ENCODE measurements at regions of chr4 and their contacts with region 1.

Region 1: DNA sequence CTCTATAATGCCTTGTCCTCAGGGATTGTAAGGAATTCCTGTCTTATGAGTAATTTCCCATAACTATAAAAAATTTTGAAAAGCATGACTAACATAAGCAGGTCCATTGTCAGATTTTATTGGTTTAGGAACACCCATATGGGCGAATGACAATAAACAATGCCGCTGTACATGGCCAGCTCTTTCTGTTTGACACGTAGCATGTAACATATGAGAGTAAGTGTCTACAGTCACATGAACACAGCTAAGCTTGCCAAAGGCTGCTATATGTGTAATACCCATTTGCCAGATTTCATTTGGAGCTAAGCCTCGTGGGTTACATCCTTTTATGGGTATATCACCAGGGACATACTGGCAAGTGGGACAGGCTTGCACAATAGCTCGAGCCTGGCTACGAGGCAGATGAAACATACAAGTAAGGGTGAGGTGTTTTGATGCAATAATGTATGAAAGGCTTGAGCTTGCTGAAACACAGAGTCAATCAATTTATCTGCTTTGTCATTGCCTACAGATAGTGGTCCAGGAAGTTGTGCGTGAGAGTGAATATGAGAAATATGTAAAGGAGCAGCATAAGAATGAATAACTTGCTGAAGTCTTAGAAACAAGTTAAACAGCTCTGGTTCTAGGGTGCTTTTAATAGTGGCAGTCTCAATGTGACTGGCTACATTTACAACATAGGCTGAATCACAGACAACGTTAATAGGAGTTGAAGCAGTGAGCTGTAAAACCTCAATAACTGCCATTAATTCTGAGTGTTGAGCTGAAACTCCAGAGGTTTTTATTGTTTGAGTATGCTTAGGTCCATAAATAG is 67.4 kb upstream of the UGT2B10 start:
- DNase-seq: peak; percentile 98
- ATAC-seq: peak; percentile 87
- H3K4me3 ChIP-seq: peak overlapping the region; percentile 44; the same call in 1 of the 2 replicates
- H3K27ac ChIP-seq: peak overlapping the region; percentile 96
- H3K4me1 ChIP-seq: peaks cover 21% of the 10 kb centered on the region
- H3K27me3 ChIP-seq: no peaks in the 10 kb centered on the region
- CTCF ChIP-seq: no peak

Region 2: GRCh38 chr4:67885762-67886161 is 862.6 kb before region 1 on chr4:
- CTCF ChIA-PET with region 1: no interaction called
- POLR2A ChIA-PET with region 1: no interaction called
- intact Hi-C with region 1: no loop called
- DNase-seq: peak; percentile 94
- ATAC-seq: peak; percentile 91
- H3K4me3 ChIP-seq: peak overlapping the region; percentile 45; the same call in 1 of the 2 replicates
- H3K27ac ChIP-seq: peak overlapping the region; percentile 95
- H3K4me1 ChIP-seq: peaks cover 24% of the 10 kb centered on the region
- H3K27me3 ChIP-seq: no peaks in the 10 kb centered on the region
- CTCF ChIP-seq: no peak

Region 3: DNA sequence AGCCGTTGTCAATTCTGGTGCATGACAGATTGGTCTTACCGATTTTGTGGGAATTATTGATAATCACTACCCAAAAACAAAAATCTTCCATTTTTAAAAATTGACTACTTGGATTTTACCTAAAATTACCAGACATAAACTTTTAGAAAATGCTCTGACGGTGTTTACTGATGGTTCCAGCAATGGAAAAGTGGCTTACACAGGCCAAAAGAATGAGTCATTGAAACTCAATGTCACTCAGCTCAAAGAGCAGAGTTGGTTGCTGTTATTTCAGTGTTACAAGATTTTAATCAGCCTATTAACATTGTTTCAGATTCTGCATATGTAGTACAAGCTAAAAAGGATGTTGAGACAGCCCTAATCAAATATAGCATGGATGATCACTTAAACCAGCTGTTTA is 149.2 kb before region 1 on chr4:
- CTCF ChIA-PET with region 1: no interaction called
- POLR2A ChIA-PET with region 1: no interaction called
- intact Hi-C with region 1: loop called (anchors 1 kb)
- DNase-seq: peak; percentile 75
- ATAC-seq: peak; percentile 66
- H3K4me3 ChIP-seq: no peak overlapping the region
- H3K27ac ChIP-seq: peak overlapping the region; percentile 29
- H3K4me1 ChIP-seq: peaks cover 17% of the 10 kb centered on the region
- H3K27me3 ChIP-seq: no peaks in the 10 kb centered on the region
- CTCF ChIP-seq: no peak

Region 4: DNA sequence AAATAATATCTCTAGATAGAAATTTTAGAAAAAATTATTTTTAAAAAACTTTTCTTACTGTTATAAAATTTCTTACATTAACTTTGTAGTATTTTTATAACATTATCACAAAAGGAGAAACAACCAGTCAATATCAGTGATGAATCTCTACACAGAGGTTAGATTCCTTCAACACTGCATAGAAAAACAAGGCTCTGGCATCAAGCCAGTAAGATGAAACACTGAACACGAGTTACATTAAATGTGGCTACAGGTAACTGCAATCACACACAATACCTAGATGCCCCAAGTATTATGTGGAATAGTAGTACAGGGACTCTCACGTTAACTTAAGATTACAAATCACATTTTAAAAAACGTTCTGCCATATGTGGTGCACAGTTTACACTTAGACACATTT is 72.4 kb after region 1 on chr4:
- CTCF ChIA-PET with region 1: no interaction called
- POLR2A ChIA-PET with region 1: no interaction called
- intact Hi-C with region 1: loop called (anchors 1 kb)
- DNase-seq: peak; percentile 43
- ATAC-seq: no peak
- H3K4me3 ChIP-seq: no peak overlapping the region
- H3K27ac ChIP-seq: no peak overlapping the region
- H3K4me1 ChIP-seq: peaks cover 7% of the 10 kb centered on the region; the same call in 1 of the 2 replicates
- H3K27me3 ChIP-seq: no peaks in the 10 kb centered on the region
- CTCF ChIP-seq: no peak

Region 5: DNA sequence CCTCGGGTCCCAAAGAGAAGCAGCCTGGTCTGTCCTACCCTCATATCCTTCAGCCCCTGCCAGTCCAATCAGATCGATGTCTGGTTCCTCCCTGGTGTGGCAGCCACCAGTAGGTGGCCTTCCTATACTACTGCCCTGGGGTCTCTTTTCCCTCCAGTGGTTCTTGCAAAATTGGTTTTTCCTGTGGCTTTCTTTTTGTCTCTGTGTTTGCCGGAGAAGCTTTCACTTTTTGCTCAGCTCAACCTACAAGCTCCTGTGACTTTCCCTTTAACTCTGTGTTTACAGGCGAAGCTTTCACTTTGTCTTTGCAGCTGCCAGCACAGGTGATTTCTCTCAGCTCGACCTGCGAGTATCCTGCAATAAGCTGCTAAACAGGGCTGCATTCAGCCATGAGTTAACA is 156.4 kb after region 1 on chr4:
- CTCF ChIA-PET with region 1: no interaction called
- POLR2A ChIA-PET with region 1: no interaction called
- intact Hi-C with region 1: loop called (anchors 10 kb)
- DNase-seq: peak; percentile 39
- ATAC-seq: peak; percentile 52
- H3K4me3 ChIP-seq: no peak overlapping the region
- H3K27ac ChIP-seq: no peak overlapping the region
- H3K4me1 ChIP-seq: peaks cover 20% of the 10 kb centered on the region
- H3K27me3 ChIP-seq: no peaks in the 10 kb centered on the region
- CTCF ChIP-seq: peak; percentile 60

Region 6: DNA sequence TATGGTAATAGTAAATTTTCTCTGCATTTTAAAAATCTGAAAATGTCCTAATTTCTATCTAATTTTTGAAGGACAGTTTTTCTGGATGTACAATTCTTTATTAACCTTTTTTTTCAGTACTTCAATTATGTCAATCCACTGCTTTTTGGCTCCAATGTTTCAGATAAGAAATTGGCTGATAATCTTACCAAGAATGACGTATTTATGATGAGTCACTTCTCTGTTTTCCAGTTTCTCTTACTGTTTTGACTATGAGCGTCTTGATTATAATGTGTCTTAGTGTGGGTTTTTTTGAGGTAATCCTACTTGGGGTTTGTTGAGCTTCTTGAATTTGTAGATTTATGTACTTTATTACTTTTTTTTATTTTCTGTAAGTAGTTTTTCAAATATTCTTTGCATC is 418.9 kb after region 1 on chr4:
- CTCF ChIA-PET with region 1: no interaction called
- POLR2A ChIA-PET with region 1: no interaction called
- intact Hi-C with region 1: loop called (anchors 2 kb)
- DNase-seq: no peak
- ATAC-seq: no peak
- H3K4me3 ChIP-seq: no peak overlapping the region
- H3K27ac ChIP-seq: no peak overlapping the region
- H3K4me1 ChIP-seq: no peaks in the 10 kb centered on the region
- H3K27me3 ChIP-seq: no peaks in the 10 kb centered on the region
- CTCF ChIP-seq: no peak

Measured in PC-3 (cell line).